MCF 10A (cell line): ENCODE measurements at regions of chr1 and their contacts with region 1.

Region 1: GRCh38 chr1:175319418-175320230 is 127.0 kb upstream of the KIAA0040 start:
- DNase-seq: peak; percentile 85
- H3K4me3 Mint-ChIP-seq: no peak overlapping the region
- H3K27ac Mint-ChIP-seq: no peak overlapping the region
- H3K4me1 Mint-ChIP-seq: peaks cover 5% of the 10 kb centered on the region
- H3K27me3 Mint-ChIP-seq: no peaks in the 10 kb centered on the region
- CTCF ChIP-seq: peak; percentile 94

Region 2: DNA sequence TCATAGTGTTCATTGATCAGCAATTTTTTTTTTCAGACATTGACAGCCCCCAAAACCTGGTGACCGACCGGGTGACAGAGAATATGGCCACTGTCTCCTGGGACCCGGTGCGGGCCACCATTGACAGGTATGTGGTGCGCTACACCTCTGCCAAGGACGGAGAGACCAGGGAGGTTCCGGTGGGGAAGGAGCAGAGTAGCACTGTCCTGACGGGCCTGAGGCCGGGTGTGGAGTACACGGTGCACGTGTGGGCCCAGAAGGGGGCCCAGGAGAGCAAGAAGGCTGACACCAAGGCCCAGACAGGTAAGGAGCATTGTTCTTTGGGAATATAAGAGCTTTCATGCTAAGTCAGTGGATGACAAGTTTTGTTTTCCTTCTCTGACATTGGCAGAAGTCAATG is 202.7 kb before region 1 on chr1:
- CTCF ChIA-PET with region 1: interaction called, 12 read pairs
- POLR2A ChIA-PET with region 1: no interaction called
- intact Hi-C with region 1: no loop called
- DNase-seq: no peak
- H3K4me3 Mint-ChIP-seq: no peak overlapping the region
- H3K27ac Mint-ChIP-seq: no peak overlapping the region
- H3K4me1 Mint-ChIP-seq: no peaks in the 10 kb centered on the region
- H3K27me3 Mint-ChIP-seq: no peaks in the 10 kb centered on the region
- CTCF ChIP-seq: no peak

Region 3: GRCh38 chr1:175169305-175170018 is 150.2 kb before region 1 on chr1:
- CTCF ChIA-PET with region 1: interaction called, 23 read pairs
- POLR2A ChIA-PET with region 1: interaction called, 3 read pairs
- intact Hi-C with region 1: no loop called
- DNase-seq: peak; percentile 68
- H3K4me3 Mint-ChIP-seq: no peak overlapping the region
- H3K27ac Mint-ChIP-seq: peak overlapping the region; percentile 21
- H3K4me1 Mint-ChIP-seq: peaks cover 24% of the 10 kb centered on the region
- H3K27me3 Mint-ChIP-seq: no peaks in the 10 kb centered on the region
- CTCF ChIP-seq: no peak

Region 4: GRCh38 chr1:175192630-175193526 is 126.7 kb before region 1 on chr1 and contains the start of gene KIAA0040:
- CTCF ChIA-PET with region 1: interaction called, 34 read pairs
- POLR2A ChIA-PET with region 1: no interaction called
- intact Hi-C with region 1: no loop called
- DNase-seq: peak; percentile 87
- H3K4me3 Mint-ChIP-seq: peak within 1 kb of the TSS; percentile 80
- H3K27ac Mint-ChIP-seq: peak within 1 kb of the TSS; percentile 67
- H3K4me1 Mint-ChIP-seq: peaks cover 43% of the 10 kb centered on the region
- H3K27me3 Mint-ChIP-seq: no peaks in the 10 kb centered on the region
- CTCF ChIP-seq: no peak
- total RNA-seq, gene KIAA0040: 26.7 and 27.7 TPM in 2 replicates

Region 5: GRCh38 chr1:175244206-175244605 is 75.4 kb before region 1 on chr1:
- CTCF ChIA-PET with region 1: interaction called, 13 read pairs
- POLR2A ChIA-PET with region 1: no interaction called
- intact Hi-C with region 1: no loop called
- DNase-seq: no peak
- H3K4me3 Mint-ChIP-seq: no peak overlapping the region
- H3K27ac Mint-ChIP-seq: no peak overlapping the region
- H3K4me1 Mint-ChIP-seq: no peaks in the 10 kb centered on the region
- H3K27me3 Mint-ChIP-seq: no peaks in the 10 kb centered on the region
- CTCF ChIP-seq: no peak

Region 6: GRCh38 chr1:175307160-175307559 is 12.5 kb before region 1 on chr1:
- CTCF ChIA-PET with region 1: interaction called, 61 read pairs
- POLR2A ChIA-PET with region 1: no interaction called
- intact Hi-C with region 1: no loop called
- DNase-seq: no peak
- H3K4me3 Mint-ChIP-seq: no peak overlapping the region
- H3K27ac Mint-ChIP-seq: no peak overlapping the region
- H3K4me1 Mint-ChIP-seq: peaks cover 5% of the 10 kb centered on the region
- H3K27me3 Mint-ChIP-seq: peaks cover 33% of the 10 kb centered on the region
- CTCF ChIP-seq: no peak